Heart right ventricle (tissue), 16 donors: ENCODE measurements at regions of chr1 and their contacts with region 1.

Region 1: DNA sequence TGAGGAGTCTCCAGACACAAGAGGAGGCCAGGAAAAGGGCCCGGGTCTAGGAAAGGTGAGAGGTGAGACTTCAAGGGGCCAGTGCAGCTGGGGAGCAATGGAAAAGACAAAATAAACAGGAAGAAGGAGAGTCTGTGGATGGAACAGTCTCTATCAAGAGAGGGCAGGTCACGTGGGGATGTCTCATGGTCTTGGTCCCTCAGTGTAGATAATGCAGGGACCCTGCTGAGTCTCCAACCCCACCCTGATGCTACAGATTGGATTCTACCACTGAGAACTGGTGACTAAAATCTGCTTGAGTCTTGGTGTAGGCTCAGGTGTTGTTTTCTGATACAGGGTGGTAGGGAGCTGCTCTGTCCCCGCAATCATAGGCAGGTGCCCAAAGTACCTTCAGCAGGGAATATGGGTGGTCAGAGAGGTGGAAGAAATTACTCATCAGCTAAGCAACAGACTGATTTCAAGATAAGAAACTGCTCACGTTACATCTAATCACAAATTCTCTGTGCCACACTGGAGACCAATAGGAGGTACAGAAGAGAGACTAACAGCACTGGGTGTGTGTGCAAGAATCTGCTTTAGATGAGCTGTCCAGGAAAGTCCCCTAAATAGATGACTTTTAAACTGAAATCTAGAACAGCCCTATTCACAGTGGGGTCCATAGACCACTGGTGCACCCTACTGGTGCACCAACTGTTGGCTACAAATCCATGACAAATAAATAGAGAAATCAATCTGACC is 101.5 kb upstream of the TLR5 start:
- DNase-seq: no peak
- ATAC-seq: peak in 6 of 8 donors; percentile 46 to 75 (median 68)
- H3K4me3 ChIP-seq: no peak overlapping the region
- H3K27ac ChIP-seq: no peak overlapping the region
- H3K4me1 ChIP-seq: no peaks in the 10 kb centered on the region
- H3K27me3 ChIP-seq: no peaks in the 10 kb centered on the region
- CTCF ChIP-seq: peak in 8 of 9 donors; percentile 8 to 65 (median 49)

Region 2: GRCh38 chr1:222792744-222793143 is 451.8 kb before region 1 on chr1:
- intact Hi-C with region 1: loop called in 1 of 10 experiments (anchors 5 kb)
- DNase-seq: no peak
- ATAC-seq: peak in 1 of 8 donors; percentile 57
- H3K4me3 ChIP-seq: no peak overlapping the region
- H3K27ac ChIP-seq: no peak overlapping the region
- H3K4me1 ChIP-seq: peaks cover 0 to 4% (median 0%) of the 10 kb centered on the region in 9 donors
- H3K27me3 ChIP-seq: no peaks in the 10 kb centered on the region
- CTCF ChIP-seq: peak; percentile 14 to 75 (median 63)

Region 3: GRCh38 chr1:223479718-223480425 is 235.3 kb after region 1 on chr1:
- intact Hi-C with region 1: no loop called
- DNase-seq: no peak
- ATAC-seq: peak in 2 of 8 donors; percentile 32 to 34
- H3K4me3 ChIP-seq: no peak overlapping the region
- H3K27ac ChIP-seq: no peak overlapping the region
- H3K4me1 ChIP-seq: no peaks in the 10 kb centered on the region
- H3K27me3 ChIP-seq: peaks cover 0 to 64% (median 30%) of the 10 kb centered on the region in 7 donors
- CTCF ChIP-seq: no peak